Astrocyte of the spinal cord (primary cell): ENCODE measurements at regions of chr1 and their contacts with region 1.

Region 1: DNA sequence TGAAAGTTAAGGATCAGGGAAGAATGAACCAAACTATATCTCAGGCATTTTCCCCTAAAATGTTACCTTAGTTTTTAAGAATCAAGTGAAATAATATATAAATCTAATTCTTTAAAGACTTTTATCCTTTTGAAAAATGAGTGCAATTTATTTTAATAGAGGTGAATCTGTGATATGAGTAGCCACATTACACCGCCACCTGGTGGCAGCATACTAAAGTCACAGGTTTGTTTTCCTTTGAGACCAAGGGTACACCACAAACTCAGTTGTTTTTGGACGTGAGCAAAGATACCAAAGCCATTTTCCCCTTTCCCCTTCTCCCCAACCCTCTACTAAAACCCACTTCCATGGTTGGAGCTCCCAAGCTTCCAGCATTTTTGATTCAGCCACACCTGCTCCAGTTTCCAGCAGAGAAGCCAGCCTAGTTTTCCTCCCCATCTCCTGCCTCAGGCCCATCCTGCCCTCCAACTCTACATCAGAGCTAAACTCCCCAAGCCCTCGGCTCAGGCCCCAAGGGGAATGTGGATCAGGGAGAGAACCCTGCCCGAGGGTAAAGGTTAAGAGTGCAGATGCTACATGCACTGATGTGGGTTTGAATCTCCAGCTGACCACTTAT is 22.9 kb upstream of the LDLRAP1 start:
- DNase-seq: peak; percentile 58
- H3K4me3 ChIP-seq: no peak overlapping the region
- CTCF ChIP-seq: peak; percentile 77

Region 2: GRCh38 chr1:25425098-25426085 is 95.2 kb before region 1 on chr1:
- in situ Hi-C with region 1: loop called (anchors 10 kb)
- DNase-seq: no peak
- H3K4me3 ChIP-seq: no peak overlapping the region
- CTCF ChIP-seq: no peak